ENCODE measurements at regions of chr3 and their contacts with region 1.

Region 1: GRCh38 chr3:141644931-141645330 is 93.2 kb upstream of the RNF7 start:
- DNase-seq: peak; percentile 67
- ATAC-seq: peak; percentile 77
- H3K4me3 ChIP-seq: no peak overlapping the region
- H3K27ac ChIP-seq: no peak overlapping the region
- H3K4me1 ChIP-seq: peaks cover 51% of the 10 kb centered on the region
- H3K27me3 ChIP-seq: no peaks in the 10 kb centered on the region
- CTCF ChIP-seq: peak; percentile 78
- EP300 ChIP-seq: no peak
- POLR2A ChIP-seq: no peak
- RAD21 ChIP-seq: peak; percentile 75

Region 2: DNA sequence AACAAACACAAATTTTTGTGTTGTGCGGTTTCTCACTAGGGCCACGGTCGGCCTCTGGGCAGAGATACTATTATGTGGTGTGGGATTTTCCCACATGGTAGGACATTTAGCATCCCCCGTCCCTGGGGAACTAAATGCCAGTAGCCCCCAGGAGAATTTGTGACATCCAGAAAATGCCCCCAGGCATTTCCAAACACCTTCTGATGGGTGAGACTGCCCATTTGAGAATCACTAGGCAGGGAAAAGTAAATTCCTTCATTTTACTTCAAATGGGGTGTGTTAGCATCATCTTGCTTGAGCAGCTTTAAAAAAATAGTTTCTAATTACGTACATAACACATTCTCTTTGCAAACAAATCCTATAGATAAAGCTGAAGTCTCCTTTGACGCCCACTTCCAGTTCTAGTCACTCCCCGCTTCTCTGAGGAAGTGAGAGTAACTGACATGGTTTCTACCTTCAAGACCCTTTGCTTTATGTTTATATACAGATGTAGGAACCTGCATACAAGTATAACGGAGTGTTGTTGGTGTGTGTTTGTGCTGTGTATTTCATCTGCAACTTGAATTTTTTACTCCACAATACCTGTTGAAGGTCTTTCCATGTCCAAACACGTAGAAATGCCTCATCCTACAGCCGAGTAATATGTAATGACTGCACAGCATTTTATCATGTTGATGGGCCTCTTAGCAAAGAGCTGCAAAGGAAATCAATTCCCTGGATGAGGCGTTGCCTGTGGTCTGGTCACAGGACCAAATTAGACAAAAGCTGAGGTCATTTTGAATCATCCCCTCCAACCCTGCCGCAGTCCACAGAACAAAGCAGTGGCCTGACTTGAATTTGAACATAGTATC is 308.0 kb before region 1 on chr3:
- CTCF ChIA-PET with region 1: no interaction called
- POLR2A ChIA-PET with region 1: no interaction called
- in situ Hi-C with region 1: no loop called
- intact Hi-C with region 1: no loop called
- DNase-seq: peak; percentile 56
- ATAC-seq: peak; percentile 50
- H3K4me3 ChIP-seq: no peak overlapping the region
- H3K27ac ChIP-seq: no peak overlapping the region
- H3K4me1 ChIP-seq: peaks cover 40% of the 10 kb centered on the region
- H3K27me3 ChIP-seq: no peaks in the 10 kb centered on the region
- CTCF ChIP-seq: no peak
- EP300 ChIP-seq: no peak
- POLR2A ChIP-seq: no peak
- RAD21 ChIP-seq: no peak

Region 3: GRCh38 chr3:141460097-141460704 is 184.7 kb before region 1 on chr3:
- CTCF ChIA-PET with region 1: interaction called, 3 read pairs
- POLR2A ChIA-PET with region 1: no interaction called
- in situ Hi-C with region 1: no loop called
- intact Hi-C with region 1: loop called (anchors 10 kb)
- DNase-seq: peak; percentile 75
- ATAC-seq: peak; percentile 92
- H3K4me3 ChIP-seq: no peak overlapping the region
- H3K27ac ChIP-seq: no peak overlapping the region
- H3K4me1 ChIP-seq: peaks cover 77% of the 10 kb centered on the region
- H3K27me3 ChIP-seq: no peaks in the 10 kb centered on the region
- CTCF ChIP-seq: peak; percentile 95
- EP300 ChIP-seq: no peak
- POLR2A ChIP-seq: no peak
- RAD21 ChIP-seq: peak; percentile 86

Region 4: DNA sequence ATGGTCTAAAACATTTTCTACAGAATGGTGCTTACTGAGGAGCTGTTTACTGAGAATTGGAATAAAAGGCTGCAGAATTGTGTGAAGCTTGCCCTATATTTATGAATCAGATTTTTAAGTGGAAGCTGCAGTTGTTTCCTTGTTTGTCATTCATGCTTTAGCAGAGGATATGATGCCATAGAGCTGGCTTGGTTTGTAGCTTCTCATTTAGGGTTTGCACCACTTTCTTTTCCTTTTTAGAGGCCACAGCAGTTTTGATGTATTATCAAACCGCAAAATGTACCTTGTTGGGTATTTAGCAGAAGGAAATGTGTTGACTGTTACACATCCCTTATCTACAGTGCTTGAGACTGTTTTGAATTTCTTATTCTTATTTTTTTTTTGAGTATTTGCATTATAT is 91.9 kb before region 1 on chr3:
- CTCF ChIA-PET with region 1: no interaction called
- POLR2A ChIA-PET with region 1: no interaction called
- in situ Hi-C with region 1: no loop called
- intact Hi-C with region 1: no loop called
- DNase-seq: no peak
- ATAC-seq: no peak
- H3K4me3 ChIP-seq: no peak overlapping the region
- H3K27ac ChIP-seq: no peak overlapping the region
- H3K4me1 ChIP-seq: no peaks in the 10 kb centered on the region
- H3K27me3 ChIP-seq: no peaks in the 10 kb centered on the region
- CTCF ChIP-seq: no peak
- EP300 ChIP-seq: no peak
- POLR2A ChIP-seq: no peak
- RAD21 ChIP-seq: no peak

Region 5: GRCh38 chr3:141575879-141576743 is 68.8 kb before region 1 on chr3:
- CTCF ChIA-PET with region 1: no interaction called
- POLR2A ChIA-PET with region 1: no interaction called
- in situ Hi-C with region 1: no loop called
- intact Hi-C with region 1: loop called (anchors 5 kb)
- DNase-seq: peak; percentile 7
- ATAC-seq: peak; percentile 61; the same call in 2 of the 3 replicates
- H3K4me3 ChIP-seq: no peak overlapping the region
- H3K27ac ChIP-seq: no peak overlapping the region
- H3K4me1 ChIP-seq: no peaks in the 10 kb centered on the region
- H3K27me3 ChIP-seq: no peaks in the 10 kb centered on the region
- CTCF ChIP-seq: peak; percentile 36
- EP300 ChIP-seq: no peak
- POLR2A ChIP-seq: no peak
- RAD21 ChIP-seq: no peak

Region 6: DNA sequence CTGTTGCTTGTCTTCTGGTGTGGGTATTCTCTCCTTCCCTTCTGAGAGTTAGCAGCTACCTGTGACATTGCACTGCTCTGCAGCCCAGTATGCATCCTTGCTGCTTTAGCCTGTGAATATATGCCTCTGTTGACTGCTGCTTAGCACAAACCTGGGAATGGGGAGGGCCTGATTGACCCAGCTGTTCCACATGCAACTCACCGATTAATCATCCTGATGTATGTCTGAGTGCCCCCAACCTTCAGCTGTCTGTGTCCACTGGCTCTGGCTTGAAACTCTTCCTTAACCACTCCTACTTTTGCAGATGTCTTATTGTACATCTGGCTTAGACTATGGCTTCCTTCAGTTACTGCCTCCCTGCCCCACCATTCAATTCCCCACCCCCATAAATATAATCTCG is 39.0 kb before region 1 on chr3:
- CTCF ChIA-PET with region 1: no interaction called
- POLR2A ChIA-PET with region 1: no interaction called
- in situ Hi-C with region 1: no loop called
- intact Hi-C with region 1: no loop called
- DNase-seq: no peak
- ATAC-seq: no peak
- H3K4me3 ChIP-seq: no peak overlapping the region
- H3K27ac ChIP-seq: no peak overlapping the region
- H3K4me1 ChIP-seq: no peaks in the 10 kb centered on the region
- H3K27me3 ChIP-seq: no peaks in the 10 kb centered on the region
- CTCF ChIP-seq: no peak
- EP300 ChIP-seq: no peak
- POLR2A ChIP-seq: no peak
- RAD21 ChIP-seq: no peak

Region 7: GRCh38 chr3:141738022-141738890 is 93.3 kb after region 1 on chr3 and contains the start of gene RNF7:
- CTCF ChIA-PET with region 1: no interaction called
- POLR2A ChIA-PET with region 1: no interaction called
- in situ Hi-C with region 1: no loop called
- intact Hi-C with region 1: loop called (anchors 5 kb)
- DNase-seq: peak; percentile 87
- ATAC-seq: peak; percentile 96
- H3K4me3 ChIP-seq: peak within 1 kb of the TSS; percentile 90 to 99 (median 99)
- H3K27ac ChIP-seq: peak within 1 kb of the TSS; percentile 81
- H3K4me1 ChIP-seq: peaks cover 69% of the 10 kb centered on the region
- H3K27me3 ChIP-seq: no peaks in the 10 kb centered on the region; a peak in 1 of 5 replicates
- CTCF ChIP-seq: peak; percentile 88
- EP300 ChIP-seq: 0 out of 4 replicates have a peak, but pooled peaks of 1 of the 2 experiments have one; percentile 7
- POLR2A ChIP-seq: peak; percentile 86 to 88
- RAD21 ChIP-seq: peak; percentile 98
- total RNA-seq, gene RNF7: 94.7 and 102 TPM in 2 replicates

Region 8: GRCh38 chr3:141913150-141913811 is 268.4 kb after region 1 on chr3:
- CTCF ChIA-PET with region 1: interaction called, 3 read pairs
- POLR2A ChIA-PET with region 1: no interaction called
- in situ Hi-C with region 1: no loop called
- intact Hi-C with region 1: loop called (anchors 5 kb)
- DNase-seq: peak; percentile 62
- ATAC-seq: peak; percentile 83
- H3K4me3 ChIP-seq: no peak overlapping the region
- H3K27ac ChIP-seq: no peak overlapping the region
- H3K4me1 ChIP-seq: no peaks in the 10 kb centered on the region
- H3K27me3 ChIP-seq: no peaks in the 10 kb centered on the region
- CTCF ChIP-seq: peak; percentile 80
- EP300 ChIP-seq: no peak
- POLR2A ChIP-seq: no peak
- RAD21 ChIP-seq: peak; percentile 65; the same call in 1 of the 2 replicates

Measured in HepG2 (cell line).